IMR-90 (cell line): ENCODE measurements at regions of chr2 and their contacts with region 1.

Region 1: GRCh38 chr2:38377050-38377828 is at the start of gene ATL2:
- DNase-seq: peak; percentile 93
- ATAC-seq: peak; percentile 90
- H3K4me3 ChIP-seq: peak within 1 kb of the TSS; percentile 95
- H3K27ac ChIP-seq: peak within 1 kb of the TSS; percentile 83
- H3K4me1 ChIP-seq: peaks cover 2% of the 10 kb centered on the region
- H3K27me3 ChIP-seq: peaks cover 6% of the 10 kb centered on the region
- CTCF ChIP-seq: no peak
- POLR2A ChIP-seq: peak; percentile 92
- RAD21 ChIP-seq: no peak
- total RNA-seq, gene ATL2: 62.6 and 83.6 TPM in 2 replicates

Region 2: GRCh38 chr2:37394263-37394662 is 983.0 kb before region 1 on chr2:
- CTCF ChIA-PET with region 1: no interaction called
- POLR2A ChIA-PET with region 1: no interaction called
- dilution Hi-C with region 1: no loop called
- in situ Hi-C with region 1: no loop called
- intact Hi-C with region 1: no loop called
- DNase-seq: no peak
- ATAC-seq: no peak
- H3K4me3 ChIP-seq: no peak overlapping the region
- H3K27ac ChIP-seq: no peak overlapping the region
- H3K4me1 ChIP-seq: peaks cover 15% of the 10 kb centered on the region
- H3K27me3 ChIP-seq: no peaks in the 10 kb centered on the region
- CTCF ChIP-seq: no peak
- POLR2A ChIP-seq: no peak
- RAD21 ChIP-seq: no peak

Region 3: DNA sequence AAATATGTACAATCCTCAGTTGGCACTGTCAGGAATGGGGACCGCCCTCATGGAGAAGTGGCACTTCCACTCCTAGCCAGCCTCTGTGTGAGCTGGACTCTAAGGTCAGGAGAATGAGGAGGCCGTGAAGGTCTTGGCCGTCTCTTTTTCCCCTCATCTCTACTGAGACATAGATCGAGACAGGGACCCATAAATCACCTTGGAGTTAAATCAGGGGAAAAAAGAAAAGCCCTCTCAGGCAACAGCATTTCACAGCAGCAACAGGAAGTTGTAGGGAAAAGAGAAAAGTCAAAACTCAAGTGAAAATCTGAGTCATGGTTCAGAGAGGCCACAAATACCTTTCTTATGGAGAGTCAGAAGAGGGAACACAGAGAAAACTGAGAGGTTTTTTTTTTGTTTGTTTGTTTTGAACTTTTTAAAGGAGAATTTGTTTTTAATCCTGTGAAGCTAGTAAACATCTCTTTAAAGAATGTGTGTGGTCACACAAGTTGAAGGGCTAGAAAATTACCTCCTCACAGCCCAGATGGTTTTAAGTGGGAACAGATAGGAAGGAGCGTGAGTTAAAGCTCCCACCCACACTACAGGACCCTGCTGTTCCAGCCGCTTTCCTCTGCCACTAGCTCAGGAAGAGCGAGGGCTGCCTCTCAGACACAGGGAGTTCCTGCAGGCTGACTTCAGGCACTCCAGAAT is 270.7 kb before region 1 on chr2:
- CTCF ChIA-PET with region 1: no interaction called
- POLR2A ChIA-PET with region 1: no interaction called
- dilution Hi-C with region 1: no loop called
- in situ Hi-C with region 1: no loop called
- intact Hi-C with region 1: no loop called
- DNase-seq: peak; percentile 71
- ATAC-seq: peak; percentile 88
- H3K4me3 ChIP-seq: no peak overlapping the region
- H3K27ac ChIP-seq: peak overlapping the region; percentile 94
- H3K4me1 ChIP-seq: peaks cover 6% of the 10 kb centered on the region
- H3K27me3 ChIP-seq: peaks cover 8% of the 10 kb centered on the region; the same call in 1 of the 2 replicates
- CTCF ChIP-seq: no peak
- POLR2A ChIP-seq: no peak
- RAD21 ChIP-seq: no peak

Region 4: GRCh38 chr2:38362232-38362631 is 15.0 kb before region 1 on chr2:
- CTCF ChIA-PET with region 1: interaction called, 17 read pairs
- POLR2A ChIA-PET with region 1: no interaction called
- dilution Hi-C with region 1: no loop called
- in situ Hi-C with region 1: no loop called
- intact Hi-C with region 1: no loop called
- DNase-seq: no peak
- ATAC-seq: no peak
- H3K4me3 ChIP-seq: no peak overlapping the region
- H3K27ac ChIP-seq: no peak overlapping the region
- H3K4me1 ChIP-seq: no peaks in the 10 kb centered on the region
- H3K27me3 ChIP-seq: no peaks in the 10 kb centered on the region
- CTCF ChIP-seq: no peak
- POLR2A ChIP-seq: no peak
- RAD21 ChIP-seq: no peak

Region 5: DNA sequence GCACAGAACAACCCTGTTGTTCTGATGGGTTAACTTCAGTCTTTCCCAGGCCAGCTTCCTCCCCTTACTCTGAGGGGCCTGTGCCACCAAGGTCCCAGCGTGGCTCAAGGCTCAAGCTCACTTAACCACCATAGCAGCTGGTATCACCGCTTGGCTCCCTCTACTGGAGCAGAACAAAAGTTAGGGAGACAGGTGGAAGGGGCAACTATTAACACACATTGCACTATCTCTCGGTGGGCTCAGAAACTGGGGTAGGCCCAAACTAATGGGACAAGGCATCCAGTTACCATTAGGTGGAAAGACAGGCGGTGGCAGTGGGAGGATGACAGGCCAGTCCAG is 88.5 kb after region 1 on chr2:
- CTCF ChIA-PET with region 1: interaction called, 4 read pairs
- POLR2A ChIA-PET with region 1: no interaction called
- dilution Hi-C with region 1: no loop called
- in situ Hi-C with region 1: no loop called
- intact Hi-C with region 1: loop called (anchors 2 kb)
- DNase-seq: peak; percentile 21
- ATAC-seq: no peak
- H3K4me3 ChIP-seq: no peak overlapping the region
- H3K27ac ChIP-seq: no peak overlapping the region
- H3K4me1 ChIP-seq: peaks cover 7% of the 10 kb centered on the region; the same call in 1 of the 2 replicates
- H3K27me3 ChIP-seq: peaks cover 40% of the 10 kb centered on the region
- CTCF ChIP-seq: peak; percentile 32
- POLR2A ChIP-seq: no peak
- RAD21 ChIP-seq: peak; percentile 36; the same call in 1 of the 2 replicates

Region 6: DNA sequence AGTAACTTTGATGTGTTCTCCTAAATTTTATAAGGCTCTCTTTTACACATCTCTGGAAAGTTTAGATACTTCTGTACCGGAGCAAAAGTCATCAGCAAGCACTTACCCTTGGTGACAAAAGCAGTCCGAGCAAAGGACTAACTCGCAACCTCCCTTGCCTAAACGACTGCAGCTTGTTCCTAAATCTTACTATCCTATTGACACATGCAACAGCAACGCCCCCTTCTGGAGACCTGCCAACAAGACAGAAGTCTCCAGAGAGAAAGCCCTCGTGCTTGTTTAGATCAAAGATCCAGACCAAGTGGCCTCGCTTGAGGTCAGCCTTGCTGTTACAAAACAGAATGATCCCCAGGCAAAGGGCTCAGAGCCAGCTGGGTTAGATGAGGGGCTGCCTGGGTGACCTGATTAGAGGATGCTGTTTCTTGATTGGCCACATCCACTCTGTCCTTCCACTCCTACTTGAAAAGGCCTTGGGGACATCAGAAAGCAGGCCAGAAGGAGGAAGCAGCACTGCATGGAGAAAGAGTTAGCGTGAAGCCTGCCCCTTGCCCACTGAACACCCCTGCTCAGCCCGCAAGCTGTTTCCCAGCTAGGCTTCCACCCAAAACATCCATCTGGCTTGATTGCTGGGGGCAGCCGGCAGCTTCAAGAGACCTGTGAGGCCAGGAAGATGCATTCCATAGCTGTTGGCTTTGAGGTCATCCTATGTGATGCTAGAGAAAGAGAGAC is 131.2 kb after region 1 on chr2:
- CTCF ChIA-PET with region 1: interaction called, 4 read pairs
- POLR2A ChIA-PET with region 1: no interaction called
- dilution Hi-C with region 1: no loop called
- in situ Hi-C with region 1: no loop called
- intact Hi-C with region 1: loop called (anchors 5 kb)
- DNase-seq: peak; percentile 66
- ATAC-seq: no peak
- H3K4me3 ChIP-seq: no peak overlapping the region
- H3K27ac ChIP-seq: no peak overlapping the region
- H3K4me1 ChIP-seq: peaks cover 13% of the 10 kb centered on the region
- H3K27me3 ChIP-seq: peaks cover 7% of the 10 kb centered on the region; the same call in 1 of the 2 replicates
- CTCF ChIP-seq: peak; percentile 40
- POLR2A ChIP-seq: no peak
- RAD21 ChIP-seq: peak; percentile 43

Region 7: DNA sequence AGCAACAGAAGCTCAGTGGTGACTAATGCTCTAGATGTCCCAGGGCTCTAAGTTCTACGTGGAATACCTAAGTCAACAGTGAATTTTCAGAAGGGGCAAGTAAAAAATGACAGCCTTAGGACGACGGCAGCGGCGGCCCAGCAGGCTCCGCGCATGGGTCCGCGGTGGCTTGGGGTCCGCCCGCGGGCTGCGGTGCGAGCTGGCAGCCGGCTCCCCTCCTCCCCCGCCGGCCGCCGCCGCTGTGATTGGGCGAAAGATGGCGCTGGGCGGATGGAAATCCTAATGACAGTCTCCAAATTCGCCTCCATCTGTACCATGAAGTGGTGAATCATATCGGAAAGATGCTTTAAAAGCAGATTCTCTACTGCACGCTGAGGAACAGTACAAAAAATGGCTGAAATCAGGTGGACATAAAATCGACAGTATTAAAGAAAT is 150.8 kb after region 1 on chr2:
- CTCF ChIA-PET with region 1: no interaction called
- POLR2A ChIA-PET with region 1: no interaction called
- dilution Hi-C with region 1: no loop called
- in situ Hi-C with region 1: no loop called
- intact Hi-C with region 1: loop called (anchors 5 kb)
- DNase-seq: peak; percentile 69
- ATAC-seq: peak; percentile 94
- H3K4me3 ChIP-seq: peak overlapping the region; percentile 82
- H3K27ac ChIP-seq: 0 out of 2 replicates have a peak overlapping the region, but pooled peaks have one; percentile 2
- H3K4me1 ChIP-seq: no peaks in the 10 kb centered on the region; the same call in 1 of the 2 replicates
- H3K27me3 ChIP-seq: peaks cover 23% of the 10 kb centered on the region
- CTCF ChIP-seq: no peak
- POLR2A ChIP-seq: no peak
- RAD21 ChIP-seq: 0 out of 2 replicates have a peak, but pooled peaks have one; percentile 1

Region 8: GRCh38 chr2:38709567-38710194 is 332.4 kb after region 1 on chr2:
- CTCF ChIA-PET with region 1: no interaction called
- POLR2A ChIA-PET with region 1: no interaction called
- dilution Hi-C with region 1: no loop called
- in situ Hi-C with region 1: no loop called
- intact Hi-C with region 1: no loop called
- DNase-seq: no peak
- ATAC-seq: no peak
- H3K4me3 ChIP-seq: no peak overlapping the region
- H3K27ac ChIP-seq: no peak overlapping the region
- H3K4me1 ChIP-seq: peaks cover 4% of the 10 kb centered on the region
- H3K27me3 ChIP-seq: no peaks in the 10 kb centered on the region
- CTCF ChIP-seq: no peak
- POLR2A ChIP-seq: no peak
- RAD21 ChIP-seq: no peak